IMR-90 (cell line): ENCODE measurements at regions of chr6 and their contacts with region 1.

Region 1: GRCh38 chr6:148530394-148530953 is 187.8 kb downstream of the SASH1 start:
- DNase-seq: peak; percentile 98
- ATAC-seq: peak; percentile 76
- H3K4me3 ChIP-seq: peak overlapping the region; percentile 46; the same call in 1 of the 2 replicates
- H3K27ac ChIP-seq: peak overlapping the region; percentile 80
- H3K4me1 ChIP-seq: peaks cover 30% of the 10 kb centered on the region
- H3K27me3 ChIP-seq: no peaks in the 10 kb centered on the region
- CTCF ChIP-seq: no peak
- POLR2A ChIP-seq: no peak; the same call in 1 of the 2 replicates
- RAD21 ChIP-seq: no peak

Region 2: GRCh38 chr6:148128014-148128730 is 402.3 kb before region 1 on chr6:
- CTCF ChIA-PET with region 1: no interaction called
- POLR2A ChIA-PET with region 1: interaction called, 13 read pairs
- dilution Hi-C with region 1: no loop called
- in situ Hi-C with region 1: no loop called
- intact Hi-C with region 1: no loop called
- DNase-seq: no peak
- ATAC-seq: no peak
- H3K4me3 ChIP-seq: no peak overlapping the region
- H3K27ac ChIP-seq: no peak overlapping the region
- H3K4me1 ChIP-seq: no peaks in the 10 kb centered on the region
- H3K27me3 ChIP-seq: no peaks in the 10 kb centered on the region
- CTCF ChIP-seq: no peak
- POLR2A ChIP-seq: no peak
- RAD21 ChIP-seq: no peak